Activated naive CD4-positive, alpha-beta T cell treated with anti-CD3 and anti-CD28 coated beads for 36 hours (primary cell): ENCODE measurements at regions of chr11 and their contacts with region 1.

Region 1: GRCh38 chr11:2992234-2992996 is at the start of gene NAP1L4:
- DNase-seq: peak; percentile 98
- H3K4me3 Mint-ChIP-seq: peak within 1 kb of the TSS; percentile 92
- H3K27ac Mint-ChIP-seq: peak within 1 kb of the TSS; percentile 99
- H3K4me1 Mint-ChIP-seq: peaks cover 29% of the 10 kb centered on the region
- H3K27me3 Mint-ChIP-seq: no peaks in the 10 kb centered on the region
- total RNA-seq, gene NAP1L4: 240 to 245 TPM

Region 2: DNA sequence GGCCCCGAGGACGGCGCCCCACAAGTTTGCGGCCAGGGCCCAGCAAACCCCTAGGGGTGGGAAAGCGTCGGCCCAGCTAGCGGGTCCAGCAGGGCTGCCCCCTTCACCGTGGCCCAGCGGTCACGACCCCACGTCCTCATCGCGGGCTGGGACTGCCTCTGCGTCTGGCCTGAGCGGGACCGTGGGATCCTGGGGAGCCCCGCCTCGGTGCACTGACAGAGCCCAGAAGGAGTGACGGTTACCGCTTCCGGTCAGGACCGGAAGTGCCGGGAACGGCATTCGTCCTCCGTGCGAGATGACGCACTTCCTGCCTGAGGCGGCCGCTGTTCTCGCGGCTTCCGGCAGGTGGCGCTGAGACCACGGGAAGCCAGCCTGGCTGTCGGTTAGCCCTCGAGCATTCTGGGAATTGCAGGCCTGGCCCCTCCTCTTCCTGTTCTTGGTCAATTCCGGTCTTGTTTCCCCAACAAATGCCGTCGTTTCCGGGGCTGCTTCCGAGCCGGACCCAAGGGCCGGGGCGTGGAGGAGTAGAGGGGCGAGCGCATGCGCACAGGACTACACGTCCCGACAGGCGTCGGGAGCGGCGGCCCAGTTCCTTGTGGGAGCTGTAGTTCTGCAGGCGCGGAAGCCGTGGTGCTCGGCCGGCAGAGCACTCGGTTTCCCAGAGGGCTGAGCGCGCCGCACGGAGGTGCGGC is 592.2 kb before region 1 on chr11 and contains the start of gene TSSC4:
- CTCF ChIA-PET with region 1: no interaction called
- intact Hi-C with region 1: loop called (anchors 2 kb)
- DNase-seq: peak; percentile 99
- H3K4me3 Mint-ChIP-seq: peak within 1 kb of the TSS; percentile 84
- H3K27ac Mint-ChIP-seq: peak within 1 kb of the TSS; percentile 87
- H3K4me1 Mint-ChIP-seq: peaks cover 16% of the 10 kb centered on the region
- H3K27me3 Mint-ChIP-seq: no peaks in the 10 kb centered on the region
- total RNA-seq, gene TSSC4: 41.9 to 42.0 TPM

Region 3: DNA sequence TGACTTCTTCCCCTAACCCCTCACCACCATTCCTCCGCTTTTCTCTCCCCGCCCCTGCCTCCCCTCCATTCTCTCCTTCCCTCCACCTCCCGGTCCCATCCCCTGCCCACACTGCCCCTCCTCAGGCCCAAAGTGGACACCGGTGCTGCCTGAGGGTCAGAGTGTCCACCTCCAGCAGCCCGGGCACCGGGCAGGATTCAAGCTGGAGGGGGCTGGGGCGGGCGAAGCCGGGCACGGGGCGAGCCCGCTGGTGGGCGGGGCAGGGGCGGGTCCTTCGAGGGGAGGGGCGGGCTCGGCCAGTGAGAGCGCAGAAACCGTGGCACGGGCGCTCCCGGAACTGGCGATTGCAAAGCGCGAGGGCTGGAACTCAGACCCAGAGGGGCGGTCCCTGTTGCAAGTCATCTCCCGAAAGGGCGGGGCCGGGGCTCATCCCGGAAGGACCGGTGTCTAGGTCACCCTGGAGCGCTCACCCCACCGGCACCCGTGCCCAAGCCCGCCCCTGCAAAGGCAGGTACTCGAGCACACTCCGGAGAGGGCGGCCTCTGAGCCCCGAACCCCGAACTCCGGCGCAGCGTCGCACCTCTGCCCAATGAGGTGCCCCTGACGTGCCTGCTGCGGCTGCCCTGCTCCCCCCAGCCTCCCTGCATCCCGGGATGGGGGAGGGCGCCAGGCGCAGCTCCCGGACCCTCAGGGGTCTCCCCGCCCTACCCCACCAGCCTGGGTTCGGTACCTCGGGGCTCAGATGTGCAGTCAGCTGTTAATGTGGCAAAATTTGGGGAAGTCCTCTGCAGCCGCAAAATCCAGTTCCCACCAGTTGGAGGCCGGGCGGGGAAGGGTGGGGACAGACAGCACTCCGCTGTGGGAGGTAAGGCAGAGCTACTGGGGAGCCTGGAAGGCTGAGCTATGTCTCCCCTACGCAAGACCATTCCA is 90.3 kb before region 1 on chr11:
- CTCF ChIA-PET with region 1: no interaction called
- intact Hi-C with region 1: loop called (anchors 1 kb)
- DNase-seq: peak; percentile 98
- H3K4me3 Mint-ChIP-seq: peak overlapping the region; percentile 72
- H3K27ac Mint-ChIP-seq: peak overlapping the region; percentile 41
- H3K4me1 Mint-ChIP-seq: peaks cover 33% of the 10 kb centered on the region
- H3K27me3 Mint-ChIP-seq: no peaks in the 10 kb centered on the region

Region 4: GRCh38 chr11:2945031-2945756 is 47.2 kb before region 1 on chr11:
- CTCF ChIA-PET with region 1: no interaction called
- intact Hi-C with region 1: loop called (anchors 1 kb)
- DNase-seq: peak; percentile 77
- H3K4me3 Mint-ChIP-seq: no peak overlapping the region
- H3K27ac Mint-ChIP-seq: peak overlapping the region; percentile 59
- H3K4me1 Mint-ChIP-seq: peaks cover 50% of the 10 kb centered on the region
- H3K27me3 Mint-ChIP-seq: no peaks in the 10 kb centered on the region

Region 5: DNA sequence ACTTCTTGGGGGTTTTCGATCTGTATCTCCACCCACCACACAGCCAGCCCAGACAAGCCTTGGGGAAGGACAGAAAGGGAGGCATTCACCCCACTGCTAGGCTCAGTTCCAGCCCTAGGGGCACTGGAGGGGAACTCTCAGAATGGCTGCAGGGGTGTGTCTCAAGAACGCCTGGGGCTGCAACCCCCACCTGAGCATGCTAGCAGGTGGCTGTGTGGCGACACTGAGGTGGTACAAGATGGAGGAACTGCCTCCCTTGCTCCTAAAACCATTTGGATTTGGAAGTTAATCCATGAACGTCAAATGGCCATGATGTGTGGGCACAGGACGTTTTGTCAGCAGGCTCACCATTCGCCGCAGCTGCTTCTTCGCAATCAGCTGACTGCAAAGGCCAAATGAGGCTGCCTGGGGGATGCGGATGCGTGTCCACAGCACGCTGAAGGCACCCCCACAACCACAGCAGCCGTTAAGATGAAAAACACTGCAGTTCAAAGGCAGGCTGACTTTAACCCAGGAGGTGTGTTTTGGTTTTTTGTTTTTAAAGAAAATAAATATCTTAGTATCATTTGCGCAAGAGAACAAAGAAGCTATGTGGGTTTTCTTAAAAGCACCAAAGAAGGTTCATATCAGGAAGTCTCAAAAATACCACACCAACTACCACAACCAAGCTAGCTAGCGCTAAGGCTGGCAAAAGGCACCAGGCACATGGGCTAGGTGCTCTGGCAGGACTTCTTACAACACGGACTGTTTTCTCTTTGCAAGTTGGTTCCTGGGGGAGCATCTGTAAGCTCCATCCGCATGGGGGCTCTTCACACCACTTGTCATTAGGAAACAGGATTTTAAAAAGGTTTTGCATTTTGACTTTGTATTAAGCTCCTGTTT is 21.9 kb after region 1 on chr11:
- CTCF ChIA-PET with region 1: interaction called, 4 read pairs
- intact Hi-C with region 1: loop called (anchors 1 kb)
- DNase-seq: peak; percentile 53
- H3K4me3 Mint-ChIP-seq: no peak overlapping the region
- H3K27ac Mint-ChIP-seq: peak overlapping the region; percentile 54
- H3K4me1 Mint-ChIP-seq: peaks cover 38% of the 10 kb centered on the region
- H3K27me3 Mint-ChIP-seq: no peaks in the 10 kb centered on the region

Region 6: GRCh38 chr11:3030289-3031070 is 38.1 kb after region 1 on chr11:
- CTCF ChIA-PET with region 1: no interaction called
- intact Hi-C with region 1: no loop called
- DNase-seq: no peak
- H3K4me3 Mint-ChIP-seq: no peak overlapping the region
- H3K27ac Mint-ChIP-seq: no peak overlapping the region
- H3K4me1 Mint-ChIP-seq: peaks cover 6% of the 10 kb centered on the region
- H3K27me3 Mint-ChIP-seq: no peaks in the 10 kb centered on the region

Region 7: GRCh38 chr11:3057069-3057963 is 64.9 kb after region 1 on chr11 and contains the start of gene CARS1:
- CTCF ChIA-PET with region 1: no interaction called
- intact Hi-C with region 1: loop called (anchors 1 kb)
- DNase-seq: peak; percentile 96
- H3K4me3 Mint-ChIP-seq: peak within 1 kb of the TSS; percentile 92
- H3K27ac Mint-ChIP-seq: peak within 1 kb of the TSS; percentile 80
- H3K4me1 Mint-ChIP-seq: peaks cover 38% of the 10 kb centered on the region
- H3K27me3 Mint-ChIP-seq: no peaks in the 10 kb centered on the region
- total RNA-seq, gene CARS1: 126 to 128 TPM

Region 8: GRCh38 chr11:3073029-3073435 is 80.6 kb after region 1 on chr11:
- CTCF ChIA-PET with region 1: no interaction called
- intact Hi-C with region 1: no loop called
- DNase-seq: no peak
- H3K4me3 Mint-ChIP-seq: no peak overlapping the region
- H3K27ac Mint-ChIP-seq: no peak overlapping the region
- H3K4me1 Mint-ChIP-seq: no peaks in the 10 kb centered on the region
- H3K27me3 Mint-ChIP-seq: no peaks in the 10 kb centered on the region

Region 9: GRCh38 chr11:3797329-3798095 is 805.1 kb after region 1 on chr11 and contains the start of gene NUP98:
- CTCF ChIA-PET with region 1: no interaction called
- intact Hi-C with region 1: loop called (anchors 5 kb)
- DNase-seq: peak; percentile 100
- H3K4me3 Mint-ChIP-seq: peak within 1 kb of the TSS; percentile 98
- H3K27ac Mint-ChIP-seq: peak within 1 kb of the TSS; percentile 98
- H3K4me1 Mint-ChIP-seq: peaks cover 54% of the 10 kb centered on the region
- H3K27me3 Mint-ChIP-seq: no peaks in the 10 kb centered on the region
- total RNA-seq, gene NUP98: 90.8 to 97.6 TPM